Common myeloid progenitor, CD34-positive (primary cell): ENCODE measurements at regions of chr2 and their contacts with region 1.

Region 1: GRCh38 chr2:74334931-74335333 is 8.3 kb downstream of the SLC4A5 start:
- DNase-seq: peak; percentile 51 to 71 (median 60)
- H3K4me3 ChIP-seq: no peak overlapping the region
- H3K27ac ChIP-seq: no peak overlapping the region
- H3K4me1 ChIP-seq: peaks cover 0 to 2% (median 0%) of the 10 kb centered on the region in 4 experiments
- H3K27me3 ChIP-seq: no peaks in the 10 kb centered on the region

Region 2: GRCh38 chr2:74250189-74250631 is 84.7 kb before region 1 on chr2:
- CTCF ChIA-PET with region 1: interaction called, 16 read pairs
- POLR2A ChIA-PET with region 1: no interaction called
- DNase-seq: peak; percentile 37 to 60 (median 59)
- H3K4me3 ChIP-seq: no peak overlapping the region
- H3K27ac ChIP-seq: no peak overlapping the region
- H3K4me1 ChIP-seq: peaks cover 0 to 10% (median 8%) of the 10 kb centered on the region in 4 experiments
- H3K27me3 ChIP-seq: no peaks in the 10 kb centered on the region

Region 3: DNA sequence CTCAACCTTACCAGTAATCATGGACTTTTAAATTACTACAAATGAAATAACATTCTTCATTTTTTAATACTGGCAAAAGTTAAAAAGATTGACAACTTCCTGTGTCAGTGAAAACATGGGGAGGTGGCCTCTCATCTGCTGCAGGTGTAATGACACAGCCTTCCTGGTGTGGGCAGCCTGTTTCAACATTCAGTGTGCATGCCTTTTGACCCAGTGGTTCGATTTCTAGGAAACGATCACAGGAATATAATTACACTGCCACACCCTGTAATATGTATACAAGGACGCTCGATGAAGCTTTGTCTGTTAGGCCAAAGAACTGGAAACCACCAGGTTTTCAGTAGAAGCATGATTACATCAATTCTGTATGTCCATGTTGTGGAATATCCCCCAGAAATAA is 67.9 kb before region 1 on chr2:
- CTCF ChIA-PET with region 1: interaction called, 12 read pairs
- POLR2A ChIA-PET with region 1: no interaction called
- DNase-seq: peak in 2 of 3 donors; percentile 34 to 42
- H3K4me3 ChIP-seq: no peak overlapping the region
- H3K27ac ChIP-seq: no peak overlapping the region
- H3K4me1 ChIP-seq: peaks cover 0 to 4% (median 0%) of the 10 kb centered on the region in 4 experiments
- H3K27me3 ChIP-seq: no peaks in the 10 kb centered on the region

Region 4: GRCh38 chr2:74314107-74314506 is 20.8 kb before region 1 on chr2:
- CTCF ChIA-PET with region 1: interaction called, 16 read pairs
- POLR2A ChIA-PET with region 1: no interaction called
- DNase-seq: no peak
- H3K4me3 ChIP-seq: no peak overlapping the region
- H3K27ac ChIP-seq: no peak overlapping the region
- H3K4me1 ChIP-seq: no peaks in the 10 kb centered on the region
- H3K27me3 ChIP-seq: no peaks in the 10 kb centered on the region

Region 5: DNA sequence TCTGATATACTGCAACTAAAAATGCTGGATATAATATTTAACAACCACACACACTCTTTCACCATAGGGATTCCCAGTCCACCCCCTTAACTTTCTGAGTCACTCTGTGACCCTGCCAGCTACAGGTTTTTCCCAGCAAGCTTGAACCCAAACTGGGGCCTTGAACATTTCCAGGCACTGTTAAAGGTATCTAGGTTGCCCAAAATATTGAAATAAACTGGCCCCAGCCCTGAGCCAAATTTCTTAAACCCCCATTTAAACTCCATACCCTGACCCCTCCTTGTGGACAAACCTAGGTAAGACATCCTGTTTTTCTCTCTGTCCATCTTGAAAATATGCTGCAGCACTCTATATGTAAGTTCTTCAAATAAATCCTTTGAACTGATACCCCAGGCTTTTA is 64.9 kb after region 1 on chr2:
- CTCF ChIA-PET with region 1: interaction called, 14 read pairs
- POLR2A ChIA-PET with region 1: no interaction called
- DNase-seq: peak; percentile 53 to 70 (median 64)
- H3K4me3 ChIP-seq: no peak overlapping the region
- H3K27ac ChIP-seq: no peak overlapping the region
- H3K4me1 ChIP-seq: no peaks in the 10 kb centered on the region
- H3K27me3 ChIP-seq: no peaks in the 10 kb centered on the region